GM12878 (cell line): ENCODE measurements at regions of chr12 and their contacts with region 1.

Region 1: DNA sequence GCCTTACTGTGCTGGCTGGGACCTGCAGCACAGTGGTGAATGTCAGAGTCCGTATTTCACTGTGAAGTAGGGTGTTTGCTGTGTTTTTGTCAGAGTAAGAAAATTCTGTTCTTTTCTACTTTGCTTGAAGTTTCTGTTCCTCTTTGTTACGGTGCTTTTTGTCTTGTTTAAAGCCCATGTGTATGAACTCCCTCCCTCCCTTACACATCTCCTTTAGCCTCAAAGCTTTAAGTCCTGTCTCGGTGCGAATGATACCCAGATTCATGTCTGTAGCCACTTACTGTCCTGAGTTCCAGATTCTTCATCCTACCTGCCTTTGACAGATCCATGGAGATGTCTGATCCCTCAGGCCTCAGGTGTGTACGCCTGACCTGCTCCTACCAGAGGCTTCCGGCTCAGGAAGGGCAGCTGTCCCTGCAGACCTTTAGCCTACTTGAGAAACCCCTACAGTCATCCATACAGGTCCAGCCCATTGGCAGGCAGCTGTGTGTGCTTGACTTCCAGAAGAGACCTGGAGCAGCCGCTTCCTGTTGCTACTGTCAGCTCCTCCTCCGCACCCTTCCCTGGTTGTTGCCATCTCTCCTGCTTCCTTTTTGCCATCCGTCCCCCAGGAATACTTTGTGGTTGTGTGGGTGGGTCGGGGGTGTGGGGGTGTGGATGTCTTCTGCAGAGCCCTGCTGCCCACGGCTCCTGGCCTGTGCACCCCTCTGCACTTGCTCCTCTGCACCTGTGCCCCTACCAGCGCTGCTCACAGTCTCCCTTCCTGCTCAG is 72.9 kb downstream of the DDX51 start:
- DNase-seq: peak; percentile 75
- ATAC-seq: peak; percentile 91
- H3K4me3 ChIP-seq: peak overlapping the region; percentile 30; the same call in 1 of the 2 replicates
- H3K27ac ChIP-seq: peak overlapping the region; percentile 87
- H3K4me1 ChIP-seq: peaks cover 36% of the 10 kb centered on the region
- H3K27me3 ChIP-seq: no peaks in the 10 kb centered on the region
- CTCF ChIP-seq: no peak
- EP300 ChIP-seq: no peak
- POLR2A ChIP-seq: no peak
- RAD21 ChIP-seq: no peak

Region 2: GRCh38 chr12:132056951-132057350 is 14.3 kb before region 1 on chr12:
- CTCF ChIA-PET with region 1: interaction called, 3 read pairs
- POLR2A ChIA-PET with region 1: interaction called, 3 read pairs
- RAD21 ChIA-PET with region 1: interaction called, 7 read pairs
- SMC1A ChIA-PET with region 1: interaction called, 13 read pairs
- in situ Hi-C with region 1: no loop called
- intact Hi-C with region 1: no loop called
- DNase-seq: no peak
- ATAC-seq: peak; percentile 79
- H3K4me3 ChIP-seq: no peak overlapping the region
- H3K27ac ChIP-seq: peak overlapping the region; percentile 14
- H3K4me1 ChIP-seq: peaks cover 17% of the 10 kb centered on the region
- H3K27me3 ChIP-seq: no peaks in the 10 kb centered on the region
- CTCF ChIP-seq: no peak
- EP300 ChIP-seq: no peak
- POLR2A ChIP-seq: no peak
- RAD21 ChIP-seq: no peak

Region 3: GRCh38 chr12:132143336-132144071 is 72.3 kb after region 1 on chr12:
- CTCF ChIA-PET with region 1: no interaction called
- POLR2A ChIA-PET with region 1: no interaction called
- RAD21 ChIA-PET with region 1: no interaction called
- SMC1A ChIA-PET with region 1: no interaction called
- in situ Hi-C with region 1: no loop called
- intact Hi-C with region 1: loop called (anchors 2 kb)
- DNase-seq: no peak
- ATAC-seq: peak; percentile 24
- H3K4me3 ChIP-seq: peak overlapping the region; percentile 88
- H3K27ac ChIP-seq: peak overlapping the region; percentile 53; the same call in 1 of the 2 replicates
- H3K4me1 ChIP-seq: peaks cover 11% of the 10 kb centered on the region
- H3K27me3 ChIP-seq: no peaks in the 10 kb centered on the region
- CTCF ChIP-seq: no peak
- EP300 ChIP-seq: no peak
- POLR2A ChIP-seq: no peak
- RAD21 ChIP-seq: no peak